ENCODE measurements at regions of chr12 and their contacts with region 1.

Region 1: GRCh38 chr12:64759035-64759901 is at the start of gene GNS:
- DNase-seq: peak; percentile 85
- ATAC-seq: peak; percentile 90
- H3K4me3 ChIP-seq: peak within 1 kb of the TSS; percentile 87
- H3K27ac ChIP-seq: peak within 1 kb of the TSS; percentile 65
- H3K4me1 ChIP-seq: peaks cover 8% of the 10 kb centered on the region
- H3K27me3 ChIP-seq: no peaks in the 10 kb centered on the region
- CTCF ChIP-seq: no peak
- EP300 ChIP-seq: no peak
- POLR2A ChIP-seq: peak; percentile 81
- RAD21 ChIP-seq: no peak
- polyA plus RNA-seq, gene GNS: 4.1 to 4.4 TPM

Region 2: GRCh38 chr12:64042911-64043310 is 716.4 kb before region 1 on chr12:
- CTCF ChIA-PET with region 1: no interaction called
- POLR2A ChIA-PET with region 1: no interaction called
- RAD21 ChIA-PET with region 1: no interaction called
- SMC1A ChIA-PET with region 1: no interaction called
- in situ Hi-C with region 1: no loop called
- intact Hi-C with region 1: no loop called
- DNase-seq: no peak
- ATAC-seq: no peak
- H3K4me3 ChIP-seq: no peak overlapping the region
- H3K27ac ChIP-seq: no peak overlapping the region
- H3K4me1 ChIP-seq: no peaks in the 10 kb centered on the region
- H3K27me3 ChIP-seq: no peaks in the 10 kb centered on the region
- CTCF ChIP-seq: no peak
- EP300 ChIP-seq: no peak
- POLR2A ChIP-seq: no peak
- RAD21 ChIP-seq: no peak

Region 3: GRCh38 chr12:64650762-64651161 is 108.5 kb before region 1 on chr12:
- CTCF ChIA-PET with region 1: no interaction called
- POLR2A ChIA-PET with region 1: no interaction called
- RAD21 ChIA-PET with region 1: no interaction called
- SMC1A ChIA-PET with region 1: no interaction called
- in situ Hi-C with region 1: no loop called
- intact Hi-C with region 1: no loop called
- DNase-seq: no peak
- ATAC-seq: no peak
- H3K4me3 ChIP-seq: no peak overlapping the region
- H3K27ac ChIP-seq: no peak overlapping the region
- H3K4me1 ChIP-seq: peaks cover 4% of the 10 kb centered on the region
- H3K27me3 ChIP-seq: no peaks in the 10 kb centered on the region
- CTCF ChIP-seq: no peak
- EP300 ChIP-seq: no peak
- POLR2A ChIP-seq: no peak
- RAD21 ChIP-seq: no peak

Region 4: GRCh38 chr12:64714551-64714968 is 44.7 kb before region 1 on chr12:
- CTCF ChIA-PET with region 1: no interaction called
- POLR2A ChIA-PET with region 1: interaction called, 11 read pairs
- RAD21 ChIA-PET with region 1: no interaction called
- SMC1A ChIA-PET with region 1: interaction called, 4 read pairs
- in situ Hi-C with region 1: no loop called
- intact Hi-C with region 1: no loop called
- DNase-seq: peak; percentile 23
- ATAC-seq: peak; percentile 87
- H3K4me3 ChIP-seq: no peak overlapping the region
- H3K27ac ChIP-seq: peak overlapping the region; percentile 57
- H3K4me1 ChIP-seq: peaks cover 4% of the 10 kb centered on the region
- H3K27me3 ChIP-seq: no peaks in the 10 kb centered on the region
- CTCF ChIP-seq: no peak
- EP300 ChIP-seq: no peak
- POLR2A ChIP-seq: no peak
- RAD21 ChIP-seq: no peak

Region 5: DNA sequence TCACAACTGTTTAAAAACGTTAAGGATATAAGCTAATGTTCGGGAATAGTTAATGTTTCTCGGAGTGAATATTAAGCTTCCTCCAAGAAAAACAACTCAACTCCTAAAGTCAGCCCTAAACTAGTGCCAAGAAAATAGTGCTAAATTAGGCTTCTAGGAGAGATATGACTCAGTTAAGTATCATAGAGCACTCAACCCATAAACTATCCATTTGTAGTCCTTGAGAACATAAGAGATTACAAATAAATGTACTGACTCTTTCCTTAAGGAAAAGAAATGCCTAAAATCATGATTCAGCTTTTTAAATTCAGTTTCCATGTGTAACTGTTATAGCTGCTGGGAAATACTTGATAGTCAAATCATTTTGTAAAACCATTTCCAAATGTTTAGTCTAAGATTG is 1182.1 kb after region 1 on chr12:
- CTCF ChIA-PET with region 1: no interaction called
- POLR2A ChIA-PET with region 1: no interaction called
- RAD21 ChIA-PET with region 1: no interaction called
- SMC1A ChIA-PET with region 1: no interaction called
- in situ Hi-C with region 1: no loop called
- intact Hi-C with region 1: no loop called
- DNase-seq: no peak
- ATAC-seq: no peak
- H3K4me3 ChIP-seq: no peak overlapping the region
- H3K27ac ChIP-seq: no peak overlapping the region
- H3K4me1 ChIP-seq: no peaks in the 10 kb centered on the region
- H3K27me3 ChIP-seq: no peaks in the 10 kb centered on the region
- CTCF ChIP-seq: no peak
- EP300 ChIP-seq: no peak
- POLR2A ChIP-seq: no peak
- RAD21 ChIP-seq: no peak